Activated T-helper 1 cell treated with anti-CD3 and anti-CD28 coated beads, Interleukin-12 subunit alpha, Interleukin-12 subunit beta, Interleukin-2, Interleukin-4 antibody, amounts not matched to agents 30 ng/mL and 10 ng/mL and 1 ng/mL, durations not matched to agents 14 hours and 24 hours and 36 hours (primary cell): ENCODE measurements at regions of chr3 and their contacts with region 1.

Region 1: DNA sequence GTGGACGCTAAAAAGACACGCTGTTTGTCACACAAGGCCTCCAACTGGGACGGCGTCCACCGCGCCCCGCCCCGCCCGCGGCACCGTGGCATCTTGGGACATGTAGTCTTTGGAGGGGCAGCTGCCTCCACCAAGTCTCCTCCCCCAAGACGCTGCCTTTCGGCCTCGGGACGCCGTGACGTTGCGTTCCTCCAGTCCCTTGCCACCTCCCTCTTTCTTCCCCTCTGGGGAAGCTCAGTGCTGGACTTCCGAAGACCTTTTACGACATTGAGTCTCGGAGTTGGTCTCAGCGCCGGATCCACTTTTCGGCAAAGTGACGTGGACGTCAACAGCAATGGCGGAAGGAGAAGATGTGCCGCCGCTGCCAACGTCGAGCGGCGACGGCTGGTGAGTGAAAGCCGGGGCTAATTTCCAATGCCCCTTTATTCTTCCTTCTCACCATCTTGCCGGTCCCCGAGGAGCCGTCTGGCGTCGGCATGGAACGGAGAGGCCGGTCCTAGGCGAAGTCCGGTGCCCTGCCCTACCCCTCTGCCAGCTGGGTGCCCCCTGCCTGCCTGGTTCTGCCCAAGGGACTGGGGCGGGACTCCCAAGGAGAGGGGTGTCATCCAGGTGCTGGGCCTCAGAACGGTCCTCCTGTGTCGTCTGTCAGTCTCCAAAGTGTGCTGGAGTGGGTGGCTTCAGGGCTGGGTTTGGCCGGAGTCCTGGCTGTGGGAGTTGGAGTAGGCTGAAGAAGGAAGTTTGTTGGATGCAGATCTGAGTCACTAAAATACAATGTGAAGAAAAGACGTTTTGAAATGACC is at the start of gene TBC1D23:
- DNase-seq: peak; percentile 97
- H3K4me3 Mint-ChIP-seq: peak within 1 kb of the TSS; percentile 92
- H3K27ac Mint-ChIP-seq: peak within 1 kb of the TSS; percentile 97
- H3K4me1 Mint-ChIP-seq: peaks cover 38% of the 10 kb centered on the region
- H3K27me3 Mint-ChIP-seq: no peaks in the 10 kb centered on the region
- total RNA-seq, gene TBC1D23: 18.3 and 19.0 TPM in 2 replicates

Region 2: DNA sequence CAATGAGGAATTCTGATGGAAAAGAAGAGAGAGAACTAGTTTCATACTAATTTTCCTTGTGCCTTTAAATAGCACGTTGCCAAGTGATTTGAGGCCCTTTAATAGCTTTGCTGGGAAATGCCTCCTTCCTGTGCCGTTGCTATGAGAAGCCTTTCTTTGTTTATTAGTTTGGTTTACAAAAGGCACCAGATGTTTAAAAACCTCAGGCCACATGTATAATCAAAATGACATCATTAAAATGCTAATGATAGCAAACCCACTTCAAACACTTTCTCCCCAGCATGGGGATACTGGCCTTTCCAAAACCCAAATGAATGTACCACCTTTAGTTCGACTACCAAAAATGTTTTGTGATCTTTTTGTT is 50.1 kb before region 1 on chr3:
- intact Hi-C with region 1: loop called (anchors 2 kb)
- DNase-seq: peak; percentile 7
- H3K4me3 Mint-ChIP-seq: peak overlapping the region; percentile 57
- H3K27ac Mint-ChIP-seq: peak overlapping the region; percentile 77
- H3K4me1 Mint-ChIP-seq: peaks cover 27% of the 10 kb centered on the region
- H3K27me3 Mint-ChIP-seq: peaks cover 6% of the 10 kb centered on the region